A549 (cell line): ENCODE measurements at regions of chr2 and their contacts with region 1.

Region 1: DNA sequence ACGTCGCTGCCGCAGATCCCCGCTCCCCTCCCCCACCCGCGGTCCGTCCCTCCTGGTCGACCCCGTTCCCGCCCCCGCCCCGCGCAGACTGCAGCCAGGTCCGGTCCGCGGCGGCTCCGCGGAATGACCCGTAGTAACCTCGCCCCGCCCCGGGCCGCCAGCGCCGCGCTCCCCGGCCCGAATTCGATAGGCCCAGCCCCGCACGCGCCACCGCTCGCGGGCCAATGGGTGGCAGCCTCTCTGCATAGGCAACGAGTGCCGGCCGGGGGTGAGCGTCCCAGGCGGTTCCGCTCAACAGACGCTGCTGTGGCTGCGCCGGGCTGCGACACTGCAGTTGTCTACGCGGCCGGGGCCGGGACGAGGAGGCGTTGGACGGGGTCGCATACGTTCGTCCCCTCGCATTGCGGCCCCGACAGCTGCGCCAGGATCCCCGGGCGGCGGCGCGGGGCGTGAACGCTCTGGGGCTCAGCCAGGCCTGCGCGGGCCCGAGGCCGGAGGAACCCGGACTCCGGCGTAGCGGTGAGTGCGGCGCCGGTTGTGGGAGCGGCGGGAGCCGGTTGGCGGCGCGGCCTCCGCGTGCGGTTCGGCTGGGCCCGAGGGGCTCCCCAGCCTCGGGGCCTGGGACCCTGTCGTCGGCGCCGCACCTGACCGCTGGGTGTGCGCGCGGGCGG is at the start of gene ACSL3:
- DNase-seq: peak; percentile 82 to 95
- ATAC-seq: peak; percentile 95 to 97
- H3K4me3 ChIP-seq: peak within 1 kb of the TSS; percentile 96
- H3K27ac ChIP-seq: peak within 1 kb of the TSS; percentile 97 to 100
- H3K4me1 ChIP-seq: peaks cover 45% of the 10 kb centered on the region
- CTCF ChIP-seq: no peak
- EP300 ChIP-seq: no peak
- POLR2A ChIP-seq: peak; percentile 98
- RAD21 ChIP-seq: peak in 1 of 2 experiments; percentile 45; a peak in 2 of 5 replicates
- polyA plus RNA-seq, gene ACSL3: 160 and 209 TPM in 2 replicates

Region 2: DNA sequence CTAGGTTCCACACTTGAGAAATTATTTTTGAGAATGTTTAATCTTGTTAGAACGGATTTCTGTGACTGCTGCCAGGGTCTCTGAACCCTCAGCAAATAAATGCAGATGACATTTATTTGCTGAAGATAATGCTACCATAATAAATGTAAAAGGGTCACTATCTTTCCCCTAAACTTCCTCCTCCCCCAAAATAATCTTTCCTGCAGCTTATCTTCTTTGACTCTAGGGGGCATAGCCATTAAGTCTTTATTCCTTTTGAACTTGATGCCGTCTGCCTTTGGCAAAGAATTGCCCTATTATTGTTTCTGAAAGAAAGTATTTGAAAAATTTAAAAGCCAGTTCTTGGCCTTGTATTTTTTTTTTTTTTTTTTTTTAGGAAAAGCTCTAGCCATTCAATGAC is 63.6 kb before region 1 on chr2:
- CTCF ChIA-PET with region 1: interaction called, 19 read pairs
- POLR2A ChIA-PET with region 1: interaction called, 5 read pairs
- DNase-seq: peak; percentile 32 to 45
- ATAC-seq: peak; percentile 60 to 66; a peak in 3 of 6 replicates
- H3K4me3 ChIP-seq: no peak overlapping the region
- H3K27ac ChIP-seq: peak overlapping the region; percentile 52 to 72; a peak in 5 of 6 replicates
- H3K4me1 ChIP-seq: peaks cover 28% of the 10 kb centered on the region
- CTCF ChIP-seq: peak; percentile 53
- EP300 ChIP-seq: no peak
- POLR2A ChIP-seq: no peak
- RAD21 ChIP-seq: peak; percentile 50 to 52; a peak in 4 of 5 replicates

Region 3: DNA sequence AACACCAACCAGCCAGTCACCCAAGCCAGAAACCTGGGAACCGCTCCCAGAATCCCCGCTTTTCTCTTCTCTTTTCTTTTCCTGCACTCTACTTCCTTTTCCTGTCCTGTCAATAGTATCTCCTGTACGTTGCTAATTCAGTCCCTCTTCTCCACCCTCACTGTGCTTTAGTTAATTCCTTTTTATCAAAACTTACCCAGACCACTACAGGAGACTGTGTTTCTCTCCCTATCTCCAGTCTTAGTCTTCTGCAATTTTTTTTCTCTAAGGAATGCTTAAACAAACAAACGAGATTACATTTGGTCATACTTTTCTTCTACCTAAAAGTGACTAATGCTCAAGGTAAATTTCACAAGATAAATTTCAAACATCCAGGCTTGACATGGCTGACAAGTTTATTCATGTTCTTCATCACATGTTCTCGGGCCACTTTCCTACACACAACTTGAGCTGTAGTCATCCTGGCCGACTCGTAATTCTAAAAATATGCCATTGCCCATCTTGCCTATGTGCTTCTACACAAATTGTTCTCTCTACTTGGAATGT is 23.3 kb before region 1 on chr2:
- CTCF ChIA-PET with region 1: interaction called, 16 read pairs
- POLR2A ChIA-PET with region 1: interaction called, 43 read pairs
- DNase-seq: peak; percentile 55 to 72
- ATAC-seq: peak; percentile 76 to 90
- H3K4me3 ChIP-seq: no peak overlapping the region
- H3K27ac ChIP-seq: peak overlapping the region; percentile 74 to 80
- H3K4me1 ChIP-seq: peaks cover 54% of the 10 kb centered on the region
- CTCF ChIP-seq: no peak
- EP300 ChIP-seq: peak; percentile 39 to 61; a peak in 2 of 5 replicates
- POLR2A ChIP-seq: no peak
- RAD21 ChIP-seq: 0 out of 5 replicates have a peak, but pooled peaks of 1 of the 2 experiments have one; percentile 25

Region 4: DNA sequence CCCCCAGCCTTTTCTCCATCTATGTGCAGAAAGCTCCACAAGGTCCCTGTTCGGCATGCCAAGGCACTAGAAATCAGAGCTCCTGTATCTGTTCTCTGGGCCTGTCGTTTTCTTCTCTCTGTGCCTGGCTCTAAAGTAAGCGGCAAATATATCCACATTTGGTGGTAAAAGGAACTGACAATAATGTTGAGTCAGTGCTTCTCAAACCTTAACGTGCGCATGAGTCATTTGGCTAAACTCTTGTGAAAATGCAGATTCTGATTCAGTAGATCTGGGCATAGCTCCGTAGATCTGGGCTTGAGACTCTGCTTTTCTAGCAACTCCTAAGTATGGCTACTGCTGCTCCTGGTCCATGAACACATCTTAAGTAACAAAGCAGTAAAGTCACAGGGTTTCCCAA is 16.6 kb before region 1 on chr2:
- CTCF ChIA-PET with region 1: interaction called, 16 read pairs
- POLR2A ChIA-PET with region 1: interaction called, 43 read pairs
- DNase-seq: peak; percentile 27 to 71
- ATAC-seq: peak; percentile 65 to 66; a peak in 5 of 6 replicates
- H3K4me3 ChIP-seq: no peak overlapping the region
- H3K27ac ChIP-seq: peak overlapping the region; percentile 73 to 91
- H3K4me1 ChIP-seq: peaks cover 49% of the 10 kb centered on the region
- CTCF ChIP-seq: no peak
- EP300 ChIP-seq: peak in 1 of 2 experiments; percentile 25; a peak in 1 of 5 replicates
- POLR2A ChIP-seq: no peak
- RAD21 ChIP-seq: peak in 1 of 2 experiments; percentile 16; a peak in 1 of 5 replicates

Region 5: DNA sequence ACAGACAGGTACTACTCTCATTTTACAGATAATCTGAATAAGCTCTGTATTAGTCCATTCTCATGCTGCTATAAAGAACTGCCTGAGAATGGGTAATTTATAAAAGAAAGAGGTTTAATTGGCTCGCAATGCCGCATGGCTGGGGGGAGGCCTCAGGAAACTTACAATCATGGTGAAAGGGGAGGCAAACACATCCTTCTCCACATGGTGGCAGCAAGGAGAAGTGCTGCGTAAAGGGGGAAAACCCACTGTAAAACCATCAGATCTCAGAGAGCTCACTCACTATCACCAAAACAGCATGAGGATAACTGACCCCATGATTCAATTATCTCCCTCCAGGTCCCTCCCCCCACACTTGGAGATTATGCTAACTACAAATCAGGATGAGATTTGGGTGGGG is 445.5 kb after region 1 on chr2:
- CTCF ChIA-PET with region 1: no interaction called
- POLR2A ChIA-PET with region 1: no interaction called
- DNase-seq: peak in 1 of 2 experiments; percentile 42
- ATAC-seq: peak in 1 of 2 experiments; percentile 62; a peak in 3 of 6 replicates
- H3K4me3 ChIP-seq: no peak overlapping the region
- H3K27ac ChIP-seq: no peak overlapping the region
- H3K4me1 ChIP-seq: no peaks in the 10 kb centered on the region
- CTCF ChIP-seq: peak; percentile 47
- EP300 ChIP-seq: no peak
- POLR2A ChIP-seq: no peak
- RAD21 ChIP-seq: peak; percentile 40 to 62; a peak in 4 of 5 replicates